ENCODE measurements at regions of chr6 and their contacts with region 1.

Region 1: DNA sequence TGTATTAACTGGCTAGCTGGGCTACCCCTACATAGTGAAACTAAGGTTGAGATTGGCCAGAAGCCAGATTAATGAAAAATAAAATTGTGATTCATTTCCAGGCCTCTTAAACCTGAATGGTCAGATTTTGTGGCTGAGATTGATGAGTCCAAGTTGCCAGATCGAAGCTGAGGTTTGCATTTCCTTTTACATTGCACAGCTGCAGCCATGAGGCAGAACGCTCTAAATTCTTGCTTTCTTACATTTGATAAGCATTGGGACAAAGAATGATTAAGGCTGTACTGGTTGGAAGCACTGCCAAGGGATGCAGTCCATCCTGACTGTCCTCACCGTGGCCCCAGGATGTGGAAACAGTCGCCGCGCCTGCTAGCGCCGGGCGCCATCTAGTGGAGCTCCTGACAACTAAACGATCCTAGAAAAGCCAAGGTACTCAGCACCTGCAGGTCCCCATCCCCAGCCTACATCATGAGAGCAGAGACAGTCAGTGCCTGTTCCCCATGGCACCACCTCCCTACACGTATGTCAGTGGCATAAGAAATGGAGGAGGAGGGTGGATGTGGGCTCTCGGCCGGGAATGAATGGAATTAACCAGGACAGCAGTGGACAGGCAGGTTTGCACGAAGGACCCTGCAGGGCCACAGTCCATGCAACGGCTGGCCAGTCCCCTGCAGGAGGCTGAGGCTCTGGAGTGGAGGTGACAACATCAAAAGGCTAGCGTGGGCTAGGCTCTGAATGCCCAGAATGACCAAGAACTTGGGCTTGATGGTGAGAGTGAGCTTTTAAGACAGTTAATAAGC is 19.0 kb downstream of the PXDC1 start:
- DNase-seq: no peak

Region 2: GRCh38 chr6:3281631-3282475 is 450.7 kb before region 1 on chr6:
- intact Hi-C with region 1: loop called (anchors 1 kb)
- DNase-seq: peak; percentile 70

Region 3: GRCh38 chr6:3410385-3411360 is 321.9 kb before region 1 on chr6:
- intact Hi-C with region 1: loop called (anchors 10 kb)
- DNase-seq: no peak

Measured in cardiac septum (tissue), 1 donor.